ENCODE measurements at regions of chr11 and their contacts with region 1.

Region 1: GRCh38 chr11:128824191-128825049 is 42.7 kb downstream of the KCNJ1 start:
- DNase-seq: no peak
- H3K4me3 Mint-ChIP-seq: no peak overlapping the region
- H3K27ac Mint-ChIP-seq: no peak overlapping the region
- H3K4me1 Mint-ChIP-seq: no peaks in the 10 kb centered on the region
- H3K27me3 Mint-ChIP-seq: no peaks in the 10 kb centered on the region

Region 2: GRCh38 chr11:128389461-128389976 is 434.9 kb before region 1 on chr11:
- CTCF ChIA-PET with region 1: no interaction called
- intact Hi-C with region 1: no loop called
- DNase-seq: no peak
- H3K4me3 Mint-ChIP-seq: no peak overlapping the region
- H3K27ac Mint-ChIP-seq: no peak overlapping the region
- H3K4me1 Mint-ChIP-seq: peaks cover 30% of the 10 kb centered on the region
- H3K27me3 Mint-ChIP-seq: no peaks in the 10 kb centered on the region

Region 3: DNA sequence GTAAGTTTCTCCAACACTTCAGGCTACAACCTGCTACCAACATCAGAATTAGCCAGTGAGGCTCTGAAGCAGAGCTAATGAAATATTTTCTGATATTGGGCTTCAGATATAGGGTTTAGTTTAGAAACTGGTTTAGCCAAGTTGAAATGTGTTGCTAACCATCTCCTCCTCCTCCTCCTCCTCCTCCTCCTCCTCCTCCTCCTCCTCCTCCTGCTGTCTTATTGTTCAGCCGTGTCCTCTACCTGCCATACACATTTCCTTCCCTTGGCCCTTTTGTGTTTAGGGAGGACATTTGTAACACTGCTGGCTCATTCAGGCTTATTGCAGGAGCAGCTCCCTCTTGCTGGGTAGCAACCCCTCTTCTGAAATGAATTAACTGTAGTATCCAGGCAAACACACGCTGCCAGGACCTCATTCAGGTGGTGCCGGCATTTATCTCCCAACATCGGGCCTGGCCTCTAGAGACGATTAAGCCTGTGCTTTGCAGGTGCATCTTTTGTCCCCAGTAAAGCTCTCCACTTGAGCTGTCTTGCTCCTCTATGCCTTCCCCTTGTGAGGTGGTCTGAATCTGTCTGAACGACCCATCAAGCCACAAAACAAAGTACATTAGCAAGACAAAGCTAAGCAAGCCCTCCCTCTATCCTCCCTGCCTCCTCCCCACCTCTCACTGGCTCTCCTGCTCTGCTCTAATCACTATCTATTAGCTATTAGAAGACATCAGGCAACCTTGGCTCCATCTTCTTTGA is 40.2 kb before region 1 on chr11:
- CTCF ChIA-PET with region 1: no interaction called
- intact Hi-C with region 1: loop called (anchors 5 kb)
- DNase-seq: no peak
- H3K4me3 Mint-ChIP-seq: no peak overlapping the region
- H3K27ac Mint-ChIP-seq: no peak overlapping the region
- H3K4me1 Mint-ChIP-seq: peaks cover 25% of the 10 kb centered on the region
- H3K27me3 Mint-ChIP-seq: no peaks in the 10 kb centered on the region

Region 4: GRCh38 chr11:128890543-128891368 is 66.3 kb after region 1 on chr11 and contains the start of gene KCNJ5:
- CTCF ChIA-PET with region 1: no interaction called
- intact Hi-C with region 1: no loop called
- DNase-seq: no peak
- H3K4me3 Mint-ChIP-seq: peak within 1 kb of the TSS; percentile 66
- H3K27ac Mint-ChIP-seq: no peak within 1 kb of the TSS
- H3K4me1 Mint-ChIP-seq: peaks cover 5% of the 10 kb centered on the region
- H3K27me3 Mint-ChIP-seq: peaks cover 38% of the 10 kb centered on the region
- total RNA-seq, gene KCNJ5: not detected

Measured in activated naive CD4-positive, alpha-beta T cell treated with anti-CD3 and anti-CD28 coated beads for 36 hours (primary cell).